ENCODE measurements at regions of chr1 and their contacts with region 1.

Region 1: DNA sequence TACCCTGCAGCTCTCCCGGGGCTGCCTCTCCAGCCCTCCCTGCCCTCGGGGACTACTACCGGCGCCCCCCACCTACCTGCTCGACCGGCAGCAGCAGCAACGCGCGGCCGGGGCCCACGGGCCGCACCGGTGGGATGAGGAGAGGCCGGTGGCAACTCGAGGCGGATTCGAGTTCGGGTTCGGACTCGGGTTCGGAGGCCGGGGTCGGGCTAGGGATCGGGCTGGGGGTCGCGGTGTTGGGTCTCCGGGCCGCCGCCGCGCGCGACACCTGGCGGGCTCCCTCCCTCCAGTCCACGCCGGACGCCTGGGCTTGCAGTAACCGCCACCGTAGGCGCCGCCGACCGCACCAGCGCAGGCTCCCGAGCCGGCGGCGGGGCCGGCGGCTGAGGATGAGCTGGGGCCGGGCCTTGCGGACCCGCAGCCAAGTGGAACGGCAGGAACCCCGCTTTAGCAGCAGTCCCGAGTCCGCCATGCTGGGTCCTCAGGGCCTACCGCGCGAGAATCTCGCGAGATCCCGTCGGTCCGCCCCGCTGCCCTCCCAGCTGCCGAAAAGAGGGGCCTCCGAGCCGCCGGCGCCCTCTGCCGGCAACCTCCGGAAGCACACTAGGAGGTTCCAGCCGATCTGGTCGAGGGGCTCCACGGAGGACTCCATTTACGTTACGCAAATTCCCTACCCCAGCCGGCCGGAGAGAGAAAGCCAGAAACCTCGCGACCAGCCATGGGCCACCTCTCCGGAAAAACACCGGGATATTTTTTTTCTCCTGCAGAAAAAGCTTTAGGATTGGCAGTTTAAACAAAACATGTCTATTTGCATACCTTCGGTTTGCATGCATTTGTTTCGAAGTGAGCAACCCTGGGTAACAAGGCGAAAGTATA is at the start of gene NOL9:
- DNase-seq: peak; percentile 94
- H3K4me3 ChIP-seq: peak within 1 kb of the TSS; percentile 61 to 100 (median 100)
- H3K27ac ChIP-seq: peak within 1 kb of the TSS; percentile 68
- H3K4me1 ChIP-seq: peaks cover 9% of the 10 kb centered on the region
- H3K27me3 ChIP-seq: no peaks in the 10 kb centered on the region
- CTCF ChIP-seq: peak; percentile 93 to 99
- POLR2A ChIP-seq: peak; percentile 84
- total RNA-seq, gene NOL9: 39.7 and 42.9 TPM in 2 replicates

Region 2: DNA sequence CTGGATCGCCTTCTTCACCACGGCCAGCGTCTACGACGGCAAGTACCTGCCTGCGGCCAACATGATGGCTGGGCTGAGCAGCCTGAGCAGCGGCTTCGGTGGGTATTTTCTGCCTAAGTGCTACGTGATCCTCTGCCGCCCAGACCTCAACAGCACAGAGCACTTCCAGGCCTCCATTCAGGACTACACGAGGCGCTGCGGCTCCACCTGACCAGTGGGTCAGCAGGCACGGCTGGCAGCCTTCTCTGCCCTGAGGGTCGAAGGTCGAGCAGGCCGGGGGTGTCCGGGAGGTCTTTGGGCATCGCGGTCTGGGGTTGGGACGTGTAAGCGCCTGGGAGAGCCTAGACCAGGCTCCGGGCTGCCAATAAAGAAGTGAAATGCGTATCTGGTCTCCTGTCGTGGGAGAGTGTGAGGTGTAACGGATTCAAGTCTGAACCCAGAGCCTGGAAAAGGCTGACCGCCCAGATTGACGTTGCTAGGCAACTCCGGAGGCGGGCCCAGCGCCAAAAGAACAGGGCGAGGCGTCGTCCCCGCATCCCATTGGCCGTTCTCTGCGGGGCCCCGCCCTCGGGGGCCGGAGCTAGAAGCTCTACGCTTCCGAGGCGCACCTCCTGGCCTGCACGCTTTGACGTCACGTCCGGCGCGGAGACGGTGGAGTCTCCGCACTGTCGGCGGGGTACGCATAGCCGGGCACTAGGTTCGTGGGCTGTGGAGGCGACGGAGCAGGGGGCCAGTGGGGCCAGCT is 25.3 kb after region 1 on chr1 and contains the start of gene ZBTB48:
- CTCF ChIA-PET with region 1: interaction called, 15 read pairs
- POLR2A ChIA-PET with region 1: no interaction called
- dilution Hi-C with region 1: no loop called
- intact Hi-C with region 1: loop called (anchors 1 kb)
- DNase-seq: peak; percentile 97
- H3K4me3 ChIP-seq: peak within 1 kb of the TSS; percentile 57 to 98 (median 65)
- H3K27ac ChIP-seq: peak within 1 kb of the TSS; percentile 57
- H3K4me1 ChIP-seq: peaks cover 14% of the 10 kb centered on the region
- H3K27me3 ChIP-seq: no peaks in the 10 kb centered on the region
- CTCF ChIP-seq: no peak
- POLR2A ChIP-seq: peak; percentile 98
- total RNA-seq, gene ZBTB48: 25.1 and 29.2 TPM in 2 replicates

Region 3: GRCh38 chr1:6624710-6625583 is 70.7 kb after region 1 on chr1 and contains the start of gene THAP3:
- CTCF ChIA-PET with region 1: interaction called, 3 read pairs
- POLR2A ChIA-PET with region 1: no interaction called
- dilution Hi-C with region 1: no loop called
- intact Hi-C with region 1: loop called (anchors 1 kb)
- DNase-seq: peak; percentile 82
- H3K4me3 ChIP-seq: peak within 1 kb of the TSS; percentile 54 to 72 (median 58)
- H3K27ac ChIP-seq: peak within 1 kb of the TSS; percentile 13
- H3K4me1 ChIP-seq: peaks cover 4% of the 10 kb centered on the region
- H3K27me3 ChIP-seq: no peaks in the 10 kb centered on the region
- CTCF ChIP-seq: no peak
- POLR2A ChIP-seq: no peak
- total RNA-seq, gene THAP3: 15.2 and 16.7 TPM in 2 replicates

Region 4: DNA sequence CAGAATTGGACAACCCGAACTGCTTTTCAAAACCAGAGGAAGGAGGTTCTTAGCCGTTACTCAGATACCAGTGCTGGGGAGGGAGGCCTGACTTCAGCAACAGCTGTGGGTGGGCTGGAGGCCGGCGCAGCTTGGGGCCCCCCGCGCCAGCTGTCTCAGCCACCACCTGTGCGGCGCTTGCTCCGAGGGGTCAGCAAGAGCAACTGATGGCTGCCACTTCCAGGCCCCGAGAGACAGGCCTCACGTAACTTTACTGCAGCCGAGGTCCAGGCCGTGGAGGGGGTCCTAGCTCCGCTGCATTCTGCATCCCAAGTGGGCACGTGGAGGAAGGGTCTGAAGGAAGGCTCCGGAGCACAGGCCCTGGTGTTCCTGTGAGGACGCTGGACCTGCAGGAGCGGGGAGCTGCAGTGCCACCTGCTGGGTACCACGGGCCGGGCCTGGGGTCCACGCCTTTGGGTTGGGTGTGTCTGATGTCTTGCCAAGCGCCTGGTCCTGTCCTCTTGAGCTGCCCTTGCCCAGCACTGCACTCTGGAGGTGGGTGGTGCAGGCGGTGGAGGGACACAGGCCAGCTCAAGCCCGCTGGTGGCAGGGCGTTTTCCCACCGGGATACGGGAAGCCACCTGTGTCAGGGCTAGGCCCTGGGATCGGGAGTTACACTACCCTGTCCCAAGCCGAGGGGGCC is 80.2 kb after region 1 on chr1:
- CTCF ChIA-PET with region 1: interaction called, 3 read pairs
- POLR2A ChIA-PET with region 1: no interaction called
- dilution Hi-C with region 1: no loop called
- intact Hi-C with region 1: loop called (anchors 1 kb)
- DNase-seq: peak; percentile 56
- H3K4me3 ChIP-seq: no peak overlapping the region
- H3K27ac ChIP-seq: no peak overlapping the region
- H3K4me1 ChIP-seq: no peaks in the 10 kb centered on the region
- H3K27me3 ChIP-seq: no peaks in the 10 kb centered on the region
- CTCF ChIP-seq: peak; percentile 50 to 77
- POLR2A ChIP-seq: no peak

Region 5: GRCh38 chr1:6646499-6647148 is 92.4 kb after region 1 on chr1:
- CTCF ChIA-PET with region 1: interaction called, 7 read pairs
- POLR2A ChIA-PET with region 1: interaction called, 3 read pairs
- dilution Hi-C with region 1: no loop called
- intact Hi-C with region 1: loop called (anchors 1 kb)
- DNase-seq: peak; percentile 47
- H3K4me3 ChIP-seq: no peak overlapping the region
- H3K27ac ChIP-seq: no peak overlapping the region
- H3K4me1 ChIP-seq: no peaks in the 10 kb centered on the region
- H3K27me3 ChIP-seq: no peaks in the 10 kb centered on the region
- CTCF ChIP-seq: peak; percentile 50 to 57
- POLR2A ChIP-seq: no peak

Region 6: GRCh38 chr1:6658359-6659060 is 104.2 kb after region 1 on chr1:
- CTCF ChIA-PET with region 1: no interaction called
- POLR2A ChIA-PET with region 1: no interaction called
- dilution Hi-C with region 1: no loop called
- intact Hi-C with region 1: no loop called
- DNase-seq: no peak
- H3K4me3 ChIP-seq: no peak overlapping the region
- H3K27ac ChIP-seq: no peak overlapping the region
- H3K4me1 ChIP-seq: no peaks in the 10 kb centered on the region
- H3K27me3 ChIP-seq: no peaks in the 10 kb centered on the region
- CTCF ChIP-seq: no peak
- POLR2A ChIP-seq: no peak